Naive thymus-derived CD8-positive, alpha-beta T cell (primary cell): ENCODE measurements at regions of chr11 and their contacts with region 1.

Region 1: GRCh38 chr11:121451986-121452608 is at the start of gene SORL1:
- DNase-seq: peak; percentile 60 to 84 (median 74)
- ATAC-seq: peak; percentile 59 to 65
- H3K4me3 Mint-ChIP-seq: peak within 1 kb of the TSS; percentile 93 to 100 (median 97)
- H3K27ac Mint-ChIP-seq: peak within 1 kb of the TSS; percentile 94 to 99 (median 97)
- H3K4me1 Mint-ChIP-seq: peaks cover 54 to 90% (median 86%) of the 10 kb centered on the region in 4 donors
- H3K27me3 Mint-ChIP-seq: no peaks in the 10 kb centered on the region
- polyA plus RNA-seq, gene SORL1: 157 to 230 (median 158) TPM

Region 2: DNA sequence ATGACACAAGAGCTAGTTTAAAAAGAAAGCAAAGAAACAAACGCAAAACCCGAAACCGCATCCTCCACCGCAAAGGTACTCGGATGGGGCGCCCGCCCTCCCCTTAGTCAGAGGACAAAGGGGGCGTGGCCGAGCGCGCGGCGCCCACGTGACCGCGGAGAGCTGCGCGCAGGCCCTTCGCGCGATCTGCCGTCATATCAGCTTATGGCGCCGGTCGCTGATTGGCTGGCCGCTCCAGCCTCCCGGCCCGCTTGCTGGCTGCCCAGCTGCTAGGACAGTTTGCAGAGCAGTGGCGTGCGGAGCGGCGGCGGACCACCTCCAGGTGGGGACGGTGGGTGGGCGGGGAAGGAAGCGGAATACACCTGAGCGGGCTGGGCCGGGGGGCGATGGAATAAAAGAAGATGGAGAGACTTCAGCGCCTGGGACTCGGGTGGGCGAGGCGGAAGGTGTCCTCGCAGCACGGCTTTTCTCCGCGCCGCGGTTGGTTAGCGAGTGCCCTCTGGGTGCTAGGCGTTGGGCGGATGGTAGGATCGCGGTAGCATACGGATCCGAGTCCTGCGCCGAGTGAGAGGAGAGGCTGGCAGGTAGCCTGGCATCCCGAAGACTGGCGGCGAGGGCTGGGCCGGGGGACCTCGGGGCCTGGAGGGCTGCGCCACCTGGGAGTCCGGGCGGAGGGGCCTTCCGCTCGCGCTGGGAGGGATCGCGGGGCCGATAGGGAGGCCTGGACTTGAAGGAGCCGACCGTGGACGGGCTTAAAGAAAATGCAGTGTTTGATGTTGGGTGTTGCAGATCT is 159.4 kb before region 1 on chr11 and contains the start of gene SC5D:
- POLR2A ChIA-PET with region 1: interaction called, 48 read pairs
- DNase-seq: peak; percentile 93 to 99 (median 96)
- ATAC-seq: peak; percentile 84 to 85
- H3K4me3 Mint-ChIP-seq: peak within 1 kb of the TSS; percentile 90 to 99 (median 96)
- H3K27ac Mint-ChIP-seq: peak within 1 kb of the TSS; percentile 98 to 100 (median 100)
- H3K4me1 Mint-ChIP-seq: peaks cover 30 to 57% (median 50%) of the 10 kb centered on the region in 4 donors
- H3K27me3 Mint-ChIP-seq: no peaks in the 10 kb centered on the region
- polyA plus RNA-seq, gene SC5D: 8.7 to 12.7 (median 10.7) TPM

Region 3: GRCh38 chr11:121376130-121376529 is 76.0 kb before region 1 on chr11:
- POLR2A ChIA-PET with region 1: interaction called, 17 read pairs
- DNase-seq: no peak
- ATAC-seq: no peak
- H3K4me3 Mint-ChIP-seq: no peak overlapping the region
- H3K27ac Mint-ChIP-seq: peak overlapping the region in 1 of 10 donors; percentile 20
- H3K4me1 Mint-ChIP-seq: peaks cover 40 to 84% (median 79%) of the 10 kb centered on the region in 4 donors
- H3K27me3 Mint-ChIP-seq: no peaks in the 10 kb centered on the region

Region 4: GRCh38 chr11:121439337-121439736 is 12.8 kb before region 1 on chr11:
- POLR2A ChIA-PET with region 1: interaction called, 275 read pairs
- DNase-seq: no peak
- ATAC-seq: no peak
- H3K4me3 Mint-ChIP-seq: no peak overlapping the region
- H3K27ac Mint-ChIP-seq: no peak overlapping the region
- H3K4me1 Mint-ChIP-seq: peaks cover 17 to 61% (median 55%) of the 10 kb centered on the region in 4 donors
- H3K27me3 Mint-ChIP-seq: no peaks in the 10 kb centered on the region

Region 5: GRCh38 chr11:121482231-121483129 is 30.4 kb after region 1 on chr11:
- POLR2A ChIA-PET with region 1: interaction called, 90 read pairs
- DNase-seq: peak; percentile 25 to 79 (median 61)
- ATAC-seq: peak; percentile 86 to 88
- H3K4me3 Mint-ChIP-seq: peak overlapping the region; percentile 66 to 91 (median 86)
- H3K27ac Mint-ChIP-seq: peak overlapping the region; percentile 73 to 97 (median 94)
- H3K4me1 Mint-ChIP-seq: peaks cover 38 to 80% (median 72%) of the 10 kb centered on the region in 4 donors
- H3K27me3 Mint-ChIP-seq: no peaks in the 10 kb centered on the region

Region 6: GRCh38 chr11:121524233-121524631 is 72.1 kb after region 1 on chr11:
- POLR2A ChIA-PET with region 1: no interaction called
- DNase-seq: no peak
- ATAC-seq: no peak
- H3K4me3 Mint-ChIP-seq: peak overlapping the region in 3 of 10 donors; percentile 18 to 31 (median 26)
- H3K27ac Mint-ChIP-seq: peak overlapping the region in 9 of 10 donors; percentile 12 to 74 (median 58)
- H3K4me1 Mint-ChIP-seq: peaks cover 21 to 45% (median 36%) of the 10 kb centered on the region in 4 donors
- H3K27me3 Mint-ChIP-seq: no peaks in the 10 kb centered on the region

Region 7: DNA sequence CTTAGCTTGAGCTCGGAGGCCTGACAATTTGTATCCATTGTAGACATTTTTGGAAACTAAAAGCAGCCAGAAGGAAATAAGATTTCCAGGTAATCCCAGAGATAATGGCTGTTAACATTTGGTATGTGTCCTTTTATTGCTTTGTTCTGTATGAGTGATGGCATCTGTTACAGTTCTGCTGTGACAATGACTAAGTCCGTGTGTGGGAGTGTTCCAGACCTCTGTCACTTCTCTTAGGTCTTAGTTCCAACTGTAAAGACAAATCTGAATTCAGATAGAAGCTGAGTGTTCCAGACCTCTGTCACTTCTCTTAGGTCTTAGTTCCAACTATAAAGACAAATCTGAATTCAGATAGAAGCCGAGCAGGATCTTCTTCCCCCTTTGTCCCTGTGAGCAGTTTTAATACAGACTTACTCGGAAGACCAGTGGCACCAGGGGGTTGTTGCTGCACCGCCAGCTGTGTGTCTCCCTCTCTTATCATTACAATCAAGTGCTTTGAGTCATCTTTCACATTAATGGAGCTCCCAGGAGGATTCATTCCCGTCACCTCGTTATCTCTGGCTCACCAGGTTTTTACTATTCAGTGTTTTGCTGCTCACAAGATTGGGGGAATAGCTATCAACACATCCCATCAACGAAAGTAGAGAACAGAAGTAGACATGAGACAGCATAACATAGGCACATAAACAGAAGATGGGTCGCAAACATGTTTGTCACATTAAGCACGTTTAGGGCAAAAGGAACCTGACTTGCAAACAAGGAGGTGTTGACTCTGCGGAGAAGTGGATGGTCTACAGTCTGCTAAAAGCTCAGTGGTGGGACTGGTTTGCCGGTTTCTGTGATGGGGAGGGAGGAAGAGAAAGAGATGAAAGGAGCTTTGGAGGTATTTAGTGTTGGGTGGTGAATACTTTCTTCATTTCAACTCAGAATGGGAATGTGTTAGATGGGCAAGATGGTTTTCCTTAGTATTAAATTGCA is 191.7 kb after region 1 on chr11:
- POLR2A ChIA-PET with region 1: no interaction called
- DNase-seq: no peak
- ATAC-seq: no peak
- H3K4me3 Mint-ChIP-seq: no peak overlapping the region
- H3K27ac Mint-ChIP-seq: no peak overlapping the region
- H3K4me1 Mint-ChIP-seq: peaks cover 0 to 12% (median 6%) of the 10 kb centered on the region in 4 donors
- H3K27me3 Mint-ChIP-seq: no peaks in the 10 kb centered on the region

Region 8: GRCh38 chr11:123062158-123062891 is 1610.2 kb after region 1 on chr11:
- POLR2A ChIA-PET with region 1: interaction called, 12 read pairs
- DNase-seq: peak; percentile 98 to 100 (median 100)
- ATAC-seq: peak; percentile 83 to 88
- H3K4me3 Mint-ChIP-seq: peak overlapping the region; percentile 96 to 100 (median 99)
- H3K27ac Mint-ChIP-seq: peak overlapping the region; percentile 96 to 100 (median 98)
- H3K4me1 Mint-ChIP-seq: peaks cover 42 to 73% (median 60%) of the 10 kb centered on the region in 4 donors
- H3K27me3 Mint-ChIP-seq: peaks cover 0 to 1% (median 0%) of the 10 kb centered on the region in 5 donors